ENCODE measurements at regions of chr9 and their contacts with region 1.

Region 1: GRCh38 chr9:115591584-115591984 is 473.6 kb upstream of the TNC start:
- DNase-seq: peak; percentile 90
- H3K4me3 ChIP-seq: no peak overlapping the region
- H3K27ac ChIP-seq: no peak overlapping the region
- H3K4me1 ChIP-seq: peaks cover 3% of the 10 kb centered on the region
- H3K27me3 ChIP-seq: peaks cover 0 to 3% of the 10 kb centered on the region in 2 experiments
- CTCF ChIP-seq: peak; percentile 75 to 78
- POLR2A ChIP-seq: no peak

Region 2: GRCh38 chr9:115614931-115615401 is 23.4 kb after region 1 on chr9:
- CTCF ChIA-PET with region 1: no interaction called
- POLR2A ChIA-PET with region 1: no interaction called
- dilution Hi-C with region 1: no loop called
- intact Hi-C with region 1: no loop called
- DNase-seq: no peak
- H3K4me3 ChIP-seq: no peak overlapping the region
- H3K27ac ChIP-seq: no peak overlapping the region
- H3K4me1 ChIP-seq: no peaks in the 10 kb centered on the region
- H3K27me3 ChIP-seq: no peaks in the 10 kb centered on the region
- CTCF ChIP-seq: no peak
- POLR2A ChIP-seq: no peak

Region 3: GRCh38 chr9:116152390-116152789 is 560.8 kb after region 1 on chr9:
- CTCF ChIA-PET with region 1: interaction called, 4 read pairs
- POLR2A ChIA-PET with region 1: no interaction called
- dilution Hi-C with region 1: no loop called
- intact Hi-C with region 1: loop called (anchors 2 kb)
- DNase-seq: no peak
- H3K4me3 ChIP-seq: peak overlapping the region in 1 of 3 experiments; percentile 18
- H3K27ac ChIP-seq: peak overlapping the region; percentile 24
- H3K4me1 ChIP-seq: peaks cover 3% of the 10 kb centered on the region
- H3K27me3 ChIP-seq: peaks cover 0 to 22% of the 10 kb centered on the region in 2 experiments
- CTCF ChIP-seq: peak; percentile 9 to 17
- POLR2A ChIP-seq: no peak

Region 4: DNA sequence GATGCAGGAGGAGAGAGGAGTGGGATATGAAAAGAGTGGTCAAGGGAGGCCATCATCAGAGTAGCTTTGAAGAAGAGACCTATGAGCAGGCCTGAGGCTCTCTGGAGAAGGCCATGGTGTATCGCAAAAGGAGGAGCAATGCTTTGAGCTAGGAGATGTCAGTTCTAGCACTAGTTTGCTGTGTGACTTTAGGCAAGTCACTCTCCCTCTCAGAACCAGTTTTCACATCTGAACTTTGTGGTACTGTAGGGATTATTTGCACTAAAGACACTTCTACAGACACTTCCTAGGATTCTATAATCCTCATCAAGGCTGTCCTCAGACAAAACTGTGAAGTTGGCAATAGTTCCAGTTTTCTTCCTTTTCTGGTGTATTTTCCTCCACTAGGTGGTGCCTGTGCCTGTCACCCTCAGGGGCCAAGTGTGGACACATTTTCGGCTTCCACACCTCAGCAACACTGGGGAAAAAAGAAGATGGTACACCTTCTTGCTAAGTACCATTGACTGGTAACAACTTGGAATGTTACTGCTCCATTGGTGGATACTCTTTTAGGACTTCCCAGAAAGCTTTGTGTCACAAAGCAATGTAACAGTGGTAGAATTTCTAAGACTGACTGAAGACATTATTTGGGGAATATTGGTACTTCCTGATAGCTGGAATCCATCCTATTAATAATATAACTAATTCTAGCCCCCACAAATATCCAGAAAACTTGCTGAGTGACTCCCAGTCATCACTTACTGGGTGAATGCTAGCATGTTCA is 571.9 kb after region 1 on chr9:
- CTCF ChIA-PET with region 1: interaction called, 4 read pairs
- POLR2A ChIA-PET with region 1: no interaction called
- dilution Hi-C with region 1: no loop called
- intact Hi-C with region 1: loop called (anchors 1 kb)
- DNase-seq: no peak
- H3K4me3 ChIP-seq: no peak overlapping the region
- H3K27ac ChIP-seq: no peak overlapping the region
- H3K4me1 ChIP-seq: no peaks in the 10 kb centered on the region
- H3K27me3 ChIP-seq: no peaks in the 10 kb centered on the region
- CTCF ChIP-seq: peak; percentile 20 to 28
- POLR2A ChIP-seq: no peak

Region 5: GRCh38 chr9:116494815-116495634 is 903.4 kb after region 1 on chr9:
- CTCF ChIA-PET with region 1: no interaction called
- POLR2A ChIA-PET with region 1: no interaction called
- dilution Hi-C with region 1: no loop called
- intact Hi-C with region 1: loop called (anchors 1 kb)
- DNase-seq: no peak
- H3K4me3 ChIP-seq: no peak overlapping the region
- H3K27ac ChIP-seq: no peak overlapping the region
- H3K4me1 ChIP-seq: no peaks in the 10 kb centered on the region
- H3K27me3 ChIP-seq: no peaks in the 10 kb centered on the region
- CTCF ChIP-seq: peak; percentile 29 to 65
- POLR2A ChIP-seq: no peak

Region 6: DNA sequence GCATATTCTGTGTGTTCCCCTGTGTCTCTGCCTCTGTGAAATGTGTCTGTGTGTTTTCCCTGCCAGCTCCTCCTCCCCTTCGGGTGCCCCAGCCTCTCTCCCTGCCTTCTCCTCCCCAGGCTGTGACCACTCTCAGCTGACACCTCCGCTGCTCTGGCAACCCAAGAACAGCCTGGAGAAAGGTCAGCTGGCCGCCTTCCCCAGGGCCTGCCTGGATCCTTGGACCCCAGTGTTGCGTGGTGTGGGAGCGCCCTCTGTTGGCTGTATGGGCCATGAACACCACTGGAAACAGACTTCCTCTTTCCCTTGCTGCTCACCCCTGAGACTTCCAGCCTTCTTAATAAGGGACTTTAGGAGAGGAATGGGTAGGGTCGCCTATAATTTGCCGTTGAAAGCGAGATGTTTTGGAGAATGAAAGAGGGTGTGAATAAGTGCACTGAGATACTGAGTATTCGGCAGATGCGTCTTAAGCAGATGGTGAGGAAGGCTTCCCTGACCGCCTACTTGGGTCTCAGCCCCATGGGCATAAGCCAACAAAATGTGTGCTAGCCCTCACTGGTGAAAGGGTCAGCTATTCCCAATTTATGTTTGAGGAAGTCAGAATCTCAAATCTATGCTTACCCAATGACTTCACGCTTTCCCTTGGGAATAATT is 980.6 kb after region 1 on chr9:
- CTCF ChIA-PET with region 1: interaction called, 13 read pairs
- POLR2A ChIA-PET with region 1: no interaction called
- dilution Hi-C with region 1: no loop called
- intact Hi-C with region 1: no loop called
- DNase-seq: peak; percentile 41
- H3K4me3 ChIP-seq: no peak overlapping the region
- H3K27ac ChIP-seq: no peak overlapping the region
- H3K4me1 ChIP-seq: no peaks in the 10 kb centered on the region
- H3K27me3 ChIP-seq: no peaks in the 10 kb centered on the region
- CTCF ChIP-seq: peak; percentile 64 to 87
- POLR2A ChIP-seq: no peak

Region 7: GRCh38 chr9:116661037-116661954 is 1069.7 kb after region 1 on chr9:
- CTCF ChIA-PET with region 1: interaction called, 17 read pairs
- POLR2A ChIA-PET with region 1: no interaction called
- dilution Hi-C with region 1: no loop called
- intact Hi-C with region 1: loop called (anchors 1 kb)
- DNase-seq: peak; percentile 58
- H3K4me3 ChIP-seq: no peak overlapping the region
- H3K27ac ChIP-seq: no peak overlapping the region
- H3K4me1 ChIP-seq: no peaks in the 10 kb centered on the region
- H3K27me3 ChIP-seq: no peaks in the 10 kb centered on the region
- CTCF ChIP-seq: peak; percentile 51 to 59
- POLR2A ChIP-seq: no peak

Region 8: DNA sequence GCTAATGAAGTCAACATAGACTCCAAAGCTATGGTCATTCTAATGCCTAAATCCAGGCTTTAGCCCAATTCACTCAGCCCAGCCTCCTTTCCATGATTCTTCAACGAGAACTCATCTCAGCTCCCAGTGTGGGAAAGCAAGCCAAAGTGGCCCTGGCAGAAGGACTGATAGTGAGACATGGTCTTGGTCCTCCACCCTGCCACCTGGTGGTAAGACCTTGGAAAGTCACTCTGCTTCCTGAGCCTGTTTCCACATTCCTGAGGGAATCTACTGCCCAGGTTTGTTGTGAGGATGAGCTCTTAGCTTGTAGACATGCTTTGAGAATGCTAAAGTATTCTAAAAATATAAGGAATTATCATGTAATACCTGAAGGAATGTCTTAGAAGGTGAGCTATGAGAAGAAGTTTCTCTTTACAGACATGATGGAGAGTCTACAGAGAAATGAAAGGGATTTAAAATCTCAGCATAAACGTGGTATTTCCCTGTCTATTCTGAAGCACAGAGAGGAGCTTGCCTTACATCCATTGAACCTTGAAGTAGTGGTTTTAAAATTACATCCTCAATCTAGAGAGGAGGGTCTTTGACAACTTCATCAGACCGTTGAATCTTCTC is 1269.0 kb after region 1 on chr9:
- CTCF ChIA-PET with region 1: interaction called, 6 read pairs
- POLR2A ChIA-PET with region 1: no interaction called
- dilution Hi-C with region 1: no loop called
- intact Hi-C with region 1: loop called (anchors 1 kb)
- DNase-seq: peak; percentile 11
- H3K4me3 ChIP-seq: no peak overlapping the region
- H3K27ac ChIP-seq: no peak overlapping the region
- H3K4me1 ChIP-seq: no peaks in the 10 kb centered on the region
- H3K27me3 ChIP-seq: no peaks in the 10 kb centered on the region
- CTCF ChIP-seq: peak; percentile 45 to 54
- POLR2A ChIP-seq: no peak

Measured in endothelial cell of umbilical vein (primary cell).